ENCODE measurements at regions of chr14 and their contacts with region 1.

Region 1: DNA sequence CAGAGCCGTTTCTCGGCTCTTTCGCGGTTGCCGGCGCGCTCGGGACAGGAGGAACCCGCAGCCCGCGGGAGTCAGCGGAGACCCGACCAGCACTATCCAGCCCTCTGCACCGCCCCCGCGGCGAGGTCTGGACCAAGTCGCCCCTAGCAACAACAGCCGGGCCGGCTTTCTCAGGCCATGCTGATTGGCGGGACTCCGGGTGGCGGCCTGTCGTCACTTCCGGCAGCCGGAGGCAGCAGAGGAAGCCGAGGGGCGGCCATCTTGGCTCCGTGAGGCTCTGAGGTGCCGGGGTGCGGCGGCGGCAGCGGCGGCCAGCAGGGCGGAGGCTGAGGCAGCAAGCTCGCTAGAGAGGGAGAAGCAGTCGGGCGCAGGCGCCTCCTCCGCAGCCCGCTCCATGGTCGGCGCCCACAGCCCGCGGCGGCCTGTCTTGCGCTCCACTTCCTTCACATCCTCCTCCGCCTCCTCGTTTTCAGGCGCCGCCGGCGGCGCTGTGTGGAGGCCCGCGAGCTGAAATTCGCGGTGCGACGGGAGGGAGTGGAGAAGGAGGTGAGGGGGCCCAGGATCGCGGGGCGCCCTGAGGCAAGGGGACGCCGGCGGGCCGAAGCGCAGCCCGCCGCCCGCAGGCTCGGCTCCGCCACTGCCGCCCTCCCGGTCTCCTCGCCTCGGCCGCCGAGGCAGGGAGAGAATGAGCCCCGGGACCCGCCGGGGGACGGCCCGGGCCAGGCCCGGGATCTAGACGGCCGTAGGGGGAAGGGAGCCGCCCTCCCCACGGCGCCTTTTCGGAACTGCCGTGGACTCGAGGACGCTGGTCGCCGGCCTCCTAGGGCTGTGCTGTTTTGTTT is at the start of gene MARK3:
- DNase-seq: peak; percentile 97 to 99 (median 97)
- H3K4me3 ChIP-seq: peak within 1 kb of the TSS; percentile 68
- H3K27ac ChIP-seq: peak within 1 kb of the TSS; percentile 83 to 94
- H3K4me1 ChIP-seq: peaks cover 3% of the 10 kb centered on the region
- H3K27me3 ChIP-seq: no peaks in the 10 kb centered on the region
- CTCF ChIP-seq: peak in 1 of 3 donors; percentile 31
- EP300 ChIP-seq: no peak
- POLR2A ChIP-seq: peak; percentile 92
- total RNA-seq, gene MARK3: 63.8 to 110 (median 79.8) TPM

Region 2: DNA sequence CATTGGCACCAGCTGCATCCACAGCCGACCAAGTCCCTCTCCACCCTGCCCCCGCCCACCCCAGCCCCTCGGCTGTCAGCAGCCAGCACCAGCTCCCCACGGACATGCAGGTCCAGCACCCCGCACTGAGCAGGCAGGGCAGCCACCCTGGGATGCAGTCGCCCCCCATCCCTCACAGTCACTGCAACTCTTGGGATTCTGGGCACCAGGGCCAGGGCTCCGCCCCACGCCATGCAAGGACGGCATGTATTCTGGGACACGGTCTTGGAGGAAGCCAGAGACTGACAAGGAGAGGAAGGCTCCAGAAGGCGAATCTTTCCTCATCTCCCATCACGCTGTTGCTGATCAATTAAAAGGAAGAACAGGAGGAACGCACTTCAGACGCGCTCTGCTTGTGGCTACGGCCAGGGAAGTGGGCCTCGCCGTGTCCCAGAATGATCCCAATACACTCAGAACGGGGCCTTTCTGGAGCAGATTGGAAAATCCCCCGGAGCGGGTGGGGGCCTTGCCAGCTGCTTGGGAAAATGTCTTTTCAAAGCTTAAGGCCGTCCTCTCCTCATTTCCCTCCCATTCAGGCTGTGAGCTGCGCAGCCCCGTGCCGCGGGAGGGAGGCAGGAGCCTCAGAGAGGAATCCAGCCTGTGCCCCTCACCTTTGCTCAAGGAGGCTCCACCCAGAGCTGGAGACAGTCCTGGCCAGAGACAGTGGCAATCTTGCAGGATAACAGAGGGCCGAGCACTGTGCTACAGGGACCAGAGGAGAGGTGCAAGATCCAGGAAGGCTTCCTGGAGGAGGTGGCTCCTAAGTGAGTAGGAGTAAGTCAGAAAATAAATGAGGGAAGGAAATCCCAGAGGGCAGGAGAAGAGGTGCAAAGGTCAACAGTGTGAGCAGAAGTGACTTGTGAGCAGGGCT is 1878.2 kb before region 1 on chr14:
- intact Hi-C with region 1: no loop called
- DNase-seq: peak; percentile 7 to 34 (median 15)
- H3K4me3 ChIP-seq: no peak overlapping the region
- H3K27ac ChIP-seq: no peak overlapping the region
- H3K4me1 ChIP-seq: peaks cover 1% of the 10 kb centered on the region
- H3K27me3 ChIP-seq: no peaks in the 10 kb centered on the region
- CTCF ChIP-seq: no peak
- EP300 ChIP-seq: no peak
- POLR2A ChIP-seq: no peak

Region 3: GRCh38 chr14:103333754-103334643 is 51.4 kb before region 1 on chr14 and contains the start of gene EIF5:
- intact Hi-C with region 1: loop called in 2 of 4 experiments (anchors 5 to 10 kb)
- DNase-seq: peak; percentile 99 to 100 (median 99)
- H3K4me3 ChIP-seq: peak within 1 kb of the TSS; percentile 96
- H3K27ac ChIP-seq: peak within 1 kb of the TSS; percentile 99 to 100
- H3K4me1 ChIP-seq: peaks cover 6% of the 10 kb centered on the region
- H3K27me3 ChIP-seq: no peaks in the 10 kb centered on the region
- CTCF ChIP-seq: peak in 2 of 3 donors; percentile 73 to 78
- EP300 ChIP-seq: no peak
- POLR2A ChIP-seq: peak; percentile 96
- total RNA-seq, gene EIF5: 76.7 to 169 (median 134) TPM

Region 4: GRCh38 chr14:103356024-103356682 is 29.2 kb before region 1 on chr14:
- intact Hi-C with region 1: no loop called
- DNase-seq: no peak
- H3K4me3 ChIP-seq: no peak overlapping the region
- H3K27ac ChIP-seq: no peak overlapping the region
- H3K4me1 ChIP-seq: peaks cover 3% of the 10 kb centered on the region
- H3K27me3 ChIP-seq: no peaks in the 10 kb centered on the region
- CTCF ChIP-seq: no peak
- EP300 ChIP-seq: no peak
- POLR2A ChIP-seq: no peak